AG04449 (cell line): ENCODE measurements at regions of chr14 and their contacts with region 1.

Region 1: DNA sequence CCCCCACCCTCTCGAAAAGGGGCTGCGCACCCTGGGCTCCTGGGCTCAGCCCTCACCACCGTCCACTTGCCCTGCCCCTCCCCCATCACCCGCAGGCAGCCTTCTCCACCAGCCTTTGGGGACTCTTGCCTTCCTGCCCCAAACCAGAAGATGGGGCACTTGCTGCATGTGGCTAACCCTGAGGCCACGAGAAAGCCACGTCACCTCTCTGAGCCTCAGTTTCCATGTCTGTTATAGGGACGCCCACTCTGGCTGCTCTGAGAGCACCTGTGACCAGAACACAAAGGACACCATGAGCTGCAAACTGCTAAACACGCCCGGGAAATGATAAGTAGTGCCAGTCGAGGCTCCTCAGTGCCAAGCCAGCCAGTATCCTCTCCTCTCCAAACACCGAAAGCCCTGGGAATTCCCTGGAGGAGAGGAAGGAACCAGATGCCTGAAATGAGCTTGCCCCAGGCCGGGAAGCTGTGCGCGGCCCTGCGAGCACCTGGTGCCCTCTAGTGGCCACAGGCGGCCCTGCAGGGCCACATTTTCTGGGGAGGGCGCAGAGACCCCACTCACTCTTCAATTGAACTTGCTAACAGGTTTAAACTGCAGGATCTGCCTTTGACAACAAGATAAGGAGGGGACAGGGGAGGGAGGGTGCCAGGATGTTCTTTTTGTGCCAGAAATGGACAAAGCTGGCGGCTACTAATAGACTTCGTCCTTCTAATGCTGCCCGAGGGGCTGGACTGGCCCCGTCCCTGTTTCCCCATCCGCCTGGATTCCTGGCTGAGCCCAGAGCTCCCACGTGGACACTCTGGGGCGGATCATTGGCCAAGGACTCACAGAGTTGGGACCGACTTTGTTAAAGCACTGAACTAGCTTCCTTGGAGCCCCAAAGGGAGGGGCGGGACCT is 10.2 kb upstream of the SERPINA9 start:
- DNase-seq: no peak
- H3K4me3 ChIP-seq: no peak overlapping the region; the same call in 1 of the 2 replicates
- CTCF ChIP-seq: peak; percentile 98

Region 2: DNA sequence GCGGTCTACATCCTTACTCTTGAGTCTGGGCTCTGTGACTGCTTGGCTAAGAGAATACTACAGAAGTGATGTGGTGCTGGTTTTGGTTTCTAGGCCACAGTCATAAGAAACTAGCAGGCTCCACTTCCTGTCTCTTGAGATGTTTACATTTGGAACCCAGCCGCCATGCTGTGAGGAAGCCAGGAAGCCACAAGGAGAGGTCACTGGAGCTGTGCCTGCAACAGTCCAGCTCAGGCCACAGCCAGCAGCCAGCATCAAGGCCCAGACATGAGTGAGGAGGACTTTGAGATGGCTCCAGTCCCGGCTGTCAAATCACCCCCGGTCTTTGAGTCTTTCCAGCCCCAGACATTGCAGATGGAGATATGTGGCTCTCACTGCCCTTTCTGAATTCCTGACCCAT is 571.9 kb before region 1 on chr14:
- CTCF ChIA-PET with region 1: no interaction called
- POLR2A ChIA-PET with region 1: no interaction called
- DNase-seq: no peak
- H3K4me3 ChIP-seq: no peak overlapping the region
- CTCF ChIP-seq: no peak

Region 3: GRCh38 chr14:94423453-94424056 is 62.6 kb before region 1 on chr14:
- CTCF ChIA-PET with region 1: interaction called, 43 read pairs
- POLR2A ChIA-PET with region 1: no interaction called
- DNase-seq: no peak
- H3K4me3 ChIP-seq: no peak overlapping the region
- CTCF ChIP-seq: peak; percentile 65

Region 4: GRCh38 chr14:94448071-94448808 is 38.0 kb before region 1 on chr14:
- CTCF ChIA-PET with region 1: interaction called, 13 read pairs
- POLR2A ChIA-PET with region 1: no interaction called
- DNase-seq: no peak
- H3K4me3 ChIP-seq: no peak overlapping the region
- CTCF ChIP-seq: no peak

Region 5: DNA sequence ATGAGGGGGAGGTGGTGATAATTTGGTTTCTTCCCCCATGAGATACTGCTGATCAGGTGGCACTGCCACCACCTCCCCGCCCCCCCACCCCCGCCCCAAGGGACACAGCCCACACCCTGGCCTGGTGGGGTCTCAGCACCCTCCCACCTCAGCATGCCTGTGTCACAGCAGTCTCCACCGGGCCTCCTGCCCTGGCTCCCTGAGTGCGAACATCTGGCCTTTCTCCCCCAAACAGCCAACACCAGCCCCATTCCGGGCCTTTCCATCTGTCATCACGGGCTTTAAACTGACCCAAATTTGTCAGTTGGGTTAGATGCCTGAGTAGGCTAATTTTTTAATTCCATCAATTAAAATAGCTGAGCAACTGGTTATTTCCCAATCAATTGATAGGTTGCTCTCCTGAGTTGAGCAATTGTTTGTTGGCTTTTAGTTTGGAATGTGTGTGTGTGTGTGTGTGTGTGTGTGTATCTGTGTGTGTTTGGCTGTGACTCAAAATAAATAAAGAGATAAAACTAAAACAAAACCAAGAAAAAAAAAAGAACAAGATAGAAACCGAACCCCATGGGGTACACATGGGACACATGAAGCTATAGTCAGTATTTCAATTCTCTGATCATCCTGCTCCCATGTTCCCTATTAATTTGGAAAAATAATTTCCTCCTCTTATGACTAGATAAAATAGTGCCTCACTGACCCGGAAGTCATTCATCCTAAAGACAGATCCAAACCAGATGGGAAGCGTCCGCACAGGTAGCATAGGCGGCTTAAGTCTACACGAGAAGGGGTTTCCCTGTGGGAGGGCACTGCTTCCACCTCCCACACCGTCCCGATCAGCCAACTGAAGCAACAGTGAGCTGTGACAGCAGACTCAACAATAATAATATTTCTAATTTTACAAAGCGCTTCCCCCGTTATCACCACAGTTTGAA is 15.7 kb after region 1 on chr14:
- CTCF ChIA-PET with region 1: interaction called, 94 read pairs
- POLR2A ChIA-PET with region 1: no interaction called
- DNase-seq: no peak
- H3K4me3 ChIP-seq: no peak overlapping the region
- CTCF ChIP-seq: no peak

Region 6: DNA sequence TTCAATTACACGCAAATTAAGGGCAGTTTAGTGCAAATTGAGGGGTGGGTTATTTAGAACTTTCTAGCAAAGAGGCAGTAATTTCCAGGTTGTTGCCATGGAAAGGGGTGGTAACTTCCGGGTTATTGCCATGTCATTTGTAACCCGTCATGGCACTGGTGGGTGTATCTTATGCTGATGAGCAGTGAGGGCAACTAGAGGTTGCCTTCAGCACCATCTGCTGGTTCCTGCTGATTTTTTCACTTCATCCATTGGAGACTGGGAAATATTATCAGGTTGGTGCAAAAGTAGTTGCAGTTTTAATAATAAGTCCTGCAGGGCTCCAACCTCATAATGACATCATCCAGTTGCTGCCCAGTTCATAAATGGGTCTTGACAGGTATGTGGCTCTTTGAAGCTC is 50.6 kb after region 1 on chr14:
- CTCF ChIA-PET with region 1: interaction called, 17 read pairs
- POLR2A ChIA-PET with region 1: no interaction called
- DNase-seq: no peak
- H3K4me3 ChIP-seq: no peak overlapping the region
- CTCF ChIP-seq: no peak

Region 7: GRCh38 chr14:94681300-94682060 is 195.3 kb after region 1 on chr14:
- CTCF ChIA-PET with region 1: interaction called, 12 read pairs
- POLR2A ChIA-PET with region 1: no interaction called
- DNase-seq: no peak
- H3K4me3 ChIP-seq: no peak overlapping the region
- CTCF ChIP-seq: peak; percentile 73